HepG2 (cell line): ENCODE measurements at regions of chr10 and their contacts with region 1.

Region 1: GRCh38 chr10:102713814-102714620 is at the start of gene ARL3:
- DNase-seq: peak; percentile 95
- ATAC-seq: peak; percentile 92
- H3K4me3 ChIP-seq: peak within 1 kb of the TSS; percentile 90 to 96 (median 91)
- H3K27ac ChIP-seq: peak within 1 kb of the TSS; percentile 84
- H3K4me1 ChIP-seq: peaks cover 77% of the 10 kb centered on the region
- H3K27me3 ChIP-seq: no peaks in the 10 kb centered on the region; a peak in 1 of 5 replicates
- CTCF ChIP-seq: peak; percentile 38
- EP300 ChIP-seq: no peak
- POLR2A ChIP-seq: peak; percentile 45 to 69; a peak in 3 of 4 replicates
- RAD21 ChIP-seq: peak; percentile 41; the same call in 1 of the 2 replicates
- total RNA-seq, gene ARL3: 6.6 and 10.0 TPM in 2 replicates

Region 2: GRCh38 chr10:102546606-102547320 is 167.3 kb before region 1 on chr10:
- CTCF ChIA-PET with region 1: no interaction called
- POLR2A ChIA-PET with region 1: no interaction called
- in situ Hi-C with region 1: no loop called
- intact Hi-C with region 1: no loop called
- DNase-seq: no peak
- ATAC-seq: no peak
- H3K4me3 ChIP-seq: no peak overlapping the region
- H3K27ac ChIP-seq: no peak overlapping the region
- H3K4me1 ChIP-seq: no peaks in the 10 kb centered on the region
- H3K27me3 ChIP-seq: no peaks in the 10 kb centered on the region
- CTCF ChIP-seq: no peak
- EP300 ChIP-seq: no peak
- POLR2A ChIP-seq: no peak
- RAD21 ChIP-seq: no peak

Region 3: DNA sequence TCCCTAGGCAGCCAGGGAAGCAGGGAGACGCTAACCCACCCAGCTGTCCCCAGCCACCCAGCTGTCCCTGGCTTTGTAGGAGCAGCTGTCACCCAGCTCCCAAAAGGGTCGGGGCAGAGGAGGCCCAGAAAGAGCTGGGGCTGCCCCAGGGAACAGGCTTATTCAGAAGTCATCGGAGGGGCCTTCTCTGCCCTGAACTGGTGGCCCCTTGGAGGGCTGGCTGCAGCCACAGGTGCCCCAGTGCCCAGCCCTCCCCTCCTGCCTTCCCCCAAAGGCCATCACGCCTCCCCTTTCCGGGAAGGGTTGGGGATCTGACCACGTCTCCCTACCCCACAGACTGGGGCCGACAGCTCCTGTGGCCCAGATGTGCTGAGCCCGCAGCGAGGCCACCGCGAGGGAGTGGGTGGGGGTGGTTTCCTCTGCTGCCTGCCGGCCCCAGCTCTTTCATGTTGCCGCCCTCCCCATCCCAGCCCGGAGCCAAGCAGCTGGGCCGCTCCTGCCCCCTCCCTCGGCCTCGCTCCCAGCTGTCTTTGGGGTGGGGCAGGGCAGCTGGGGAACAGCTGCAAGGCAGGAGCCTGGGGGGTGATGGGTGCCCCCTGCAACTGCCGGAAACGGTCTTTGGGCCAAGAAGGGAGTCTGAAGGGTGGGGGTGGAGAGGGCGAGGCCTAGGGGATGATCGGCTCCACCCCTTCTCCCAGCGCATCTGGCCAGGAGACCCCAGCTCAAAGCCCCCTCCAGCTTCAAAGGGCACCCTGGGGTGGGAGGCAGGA is 52.9 kb before region 1 on chr10:
- CTCF ChIA-PET with region 1: no interaction called
- POLR2A ChIA-PET with region 1: interaction called, 10 read pairs
- in situ Hi-C with region 1: no loop called
- intact Hi-C with region 1: no loop called
- DNase-seq: peak; percentile 72
- ATAC-seq: peak; percentile 79
- H3K4me3 ChIP-seq: peak overlapping the region; percentile 11 to 63 (median 45); a peak in 5 of 6 replicates
- H3K27ac ChIP-seq: no peak overlapping the region
- H3K4me1 ChIP-seq: peaks cover 77% of the 10 kb centered on the region
- H3K27me3 ChIP-seq: no peaks in the 10 kb centered on the region
- CTCF ChIP-seq: peak; percentile 10; the same call in 1 of the 2 replicates
- EP300 ChIP-seq: peak; percentile 22 to 47; a peak in 2 of 4 replicates
- POLR2A ChIP-seq: 0 out of 4 replicates have a peak, but pooled peaks of 1 of the 2 experiments have one; percentile 11
- RAD21 ChIP-seq: no peak; the same call in 1 of the 2 replicates

Region 4: GRCh38 chr10:102678842-102679289 is 35.2 kb before region 1 on chr10:
- CTCF ChIA-PET with region 1: no interaction called
- POLR2A ChIA-PET with region 1: interaction called, 14 read pairs
- in situ Hi-C with region 1: loop called (anchors 5 kb)
- intact Hi-C with region 1: loop called (anchors 2 kb)
- DNase-seq: peak; percentile 76
- ATAC-seq: peak; percentile 93
- H3K4me3 ChIP-seq: peak overlapping the region in 2 of 3 experiments; percentile 19 to 62; a peak in 3 of 6 replicates
- H3K27ac ChIP-seq: no peak overlapping the region
- H3K4me1 ChIP-seq: peaks cover 56% of the 10 kb centered on the region
- H3K27me3 ChIP-seq: no peaks in the 10 kb centered on the region
- CTCF ChIP-seq: peak; percentile 96
- EP300 ChIP-seq: no peak
- POLR2A ChIP-seq: no peak
- RAD21 ChIP-seq: peak; percentile 91

Region 5: DNA sequence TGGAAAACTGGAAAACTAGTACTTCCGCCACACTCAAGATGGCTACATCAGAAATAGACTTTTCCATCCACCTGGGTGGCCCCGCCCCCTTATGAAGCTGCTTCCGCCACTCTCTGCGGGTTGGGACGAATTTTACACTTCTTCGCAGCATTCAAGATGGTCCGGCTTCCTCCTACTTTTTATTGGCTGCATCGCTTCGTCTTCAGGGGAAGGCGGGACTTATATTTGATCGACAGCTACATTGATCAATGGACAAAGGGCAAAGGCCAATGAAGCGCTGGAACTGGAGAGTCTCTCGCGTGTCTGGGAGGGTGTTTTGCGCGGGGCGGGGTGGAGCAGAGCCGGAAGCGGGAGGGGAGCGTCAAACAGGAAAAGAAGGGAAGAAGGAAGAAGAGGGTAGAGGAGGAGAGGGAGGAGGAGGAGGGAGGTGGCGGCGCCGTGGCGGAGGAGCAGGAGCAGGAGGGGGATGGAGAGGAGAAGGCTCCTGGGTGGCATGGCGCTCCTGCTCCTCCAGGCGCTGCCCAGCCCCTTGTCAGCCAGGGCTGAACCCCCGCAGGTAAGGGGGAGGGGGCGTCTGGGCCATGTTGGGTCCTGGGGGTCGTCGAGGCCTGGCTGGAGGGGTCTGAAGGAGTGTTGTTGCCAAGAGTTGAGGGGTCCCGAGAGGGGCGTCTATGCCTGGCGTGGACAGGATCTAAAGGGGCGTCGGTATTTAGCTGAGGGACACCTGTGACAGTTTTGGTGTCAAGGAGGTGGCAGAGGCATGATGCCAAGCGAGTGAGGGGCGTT is 29.8 kb after region 1 on chr10 and contains the start of gene WBP1L:
- CTCF ChIA-PET with region 1: no interaction called
- POLR2A ChIA-PET with region 1: interaction called, 12 read pairs
- in situ Hi-C with region 1: no loop called
- intact Hi-C with region 1: loop called (anchors 2 kb)
- DNase-seq: peak; percentile 99
- ATAC-seq: peak; percentile 94
- H3K4me3 ChIP-seq: peak within 1 kb of the TSS; percentile 72 to 94 (median 82)
- H3K27ac ChIP-seq: peak within 1 kb of the TSS; percentile 41
- H3K4me1 ChIP-seq: peaks cover 35% of the 10 kb centered on the region
- H3K27me3 ChIP-seq: no peaks in the 10 kb centered on the region; a peak in 1 of 5 replicates
- CTCF ChIP-seq: no peak
- EP300 ChIP-seq: no peak
- POLR2A ChIP-seq: peak; percentile 25 to 64
- RAD21 ChIP-seq: no peak; the same call in 1 of the 2 replicates
- total RNA-seq, gene WBP1L: 8.3 and 11.6 TPM in 2 replicates

Region 6: DNA sequence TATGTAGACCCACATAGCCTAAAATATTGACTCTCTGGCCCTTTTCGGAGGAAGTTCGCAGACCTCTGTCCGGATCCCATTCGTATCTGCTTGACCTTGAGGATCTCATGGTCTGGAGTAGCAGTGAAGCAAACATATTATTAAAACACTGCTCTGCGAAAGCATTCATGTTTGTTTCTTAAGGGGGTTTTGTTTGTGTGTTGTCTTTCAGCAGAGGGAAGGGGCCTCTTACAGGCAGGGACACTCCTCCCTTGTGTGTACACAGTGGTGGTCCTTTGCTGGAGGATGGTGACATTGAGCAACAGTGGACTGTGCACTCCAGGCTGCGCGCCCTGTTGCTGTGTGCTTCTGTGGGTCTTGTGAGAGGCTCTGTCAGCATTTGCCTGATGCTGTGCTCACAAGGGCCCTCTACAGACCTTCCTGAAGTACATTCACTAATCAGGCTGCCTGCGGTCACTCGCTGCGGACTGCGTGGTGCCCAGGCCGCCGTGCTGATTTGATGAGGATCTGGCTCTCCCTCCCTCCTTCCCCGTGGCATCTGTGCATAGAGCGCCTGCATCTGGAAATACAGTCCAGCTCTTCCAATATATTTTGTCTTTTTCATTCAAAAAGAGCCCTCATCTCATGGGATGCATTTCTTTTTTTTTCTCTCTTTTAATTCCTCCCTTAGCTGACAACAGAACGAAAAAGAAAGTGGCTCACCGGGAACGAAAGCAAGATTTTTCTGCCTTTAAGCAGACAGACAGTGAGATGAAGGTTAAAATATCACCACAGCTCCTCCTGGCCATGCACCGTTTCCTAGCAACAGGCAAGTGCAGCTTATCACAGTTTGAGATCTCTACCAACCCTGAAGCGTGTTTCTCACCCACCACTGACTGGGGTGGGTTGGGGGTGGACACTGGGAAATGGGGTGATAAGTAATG is 339.9 kb after region 1 on chr10:
- CTCF ChIA-PET with region 1: no interaction called
- POLR2A ChIA-PET with region 1: no interaction called
- in situ Hi-C with region 1: no loop called
- intact Hi-C with region 1: loop called (anchors 10 kb)
- DNase-seq: peak; percentile 96
- ATAC-seq: peak; percentile 99
- H3K4me3 ChIP-seq: peak overlapping the region in 2 of 3 experiments; percentile 41 to 54; a peak in 4 of 6 replicates
- H3K27ac ChIP-seq: peak overlapping the region; percentile 50
- H3K4me1 ChIP-seq: peaks cover 21% of the 10 kb centered on the region
- H3K27me3 ChIP-seq: no peaks in the 10 kb centered on the region
- CTCF ChIP-seq: peak; percentile 94
- EP300 ChIP-seq: peak; percentile 63 to 87; a peak in 3 of 4 replicates
- POLR2A ChIP-seq: no peak
- RAD21 ChIP-seq: peak; percentile 93